PC-9 (cell line): ENCODE measurements at regions of chr13 and their contacts with region 1.

Region 1: DNA sequence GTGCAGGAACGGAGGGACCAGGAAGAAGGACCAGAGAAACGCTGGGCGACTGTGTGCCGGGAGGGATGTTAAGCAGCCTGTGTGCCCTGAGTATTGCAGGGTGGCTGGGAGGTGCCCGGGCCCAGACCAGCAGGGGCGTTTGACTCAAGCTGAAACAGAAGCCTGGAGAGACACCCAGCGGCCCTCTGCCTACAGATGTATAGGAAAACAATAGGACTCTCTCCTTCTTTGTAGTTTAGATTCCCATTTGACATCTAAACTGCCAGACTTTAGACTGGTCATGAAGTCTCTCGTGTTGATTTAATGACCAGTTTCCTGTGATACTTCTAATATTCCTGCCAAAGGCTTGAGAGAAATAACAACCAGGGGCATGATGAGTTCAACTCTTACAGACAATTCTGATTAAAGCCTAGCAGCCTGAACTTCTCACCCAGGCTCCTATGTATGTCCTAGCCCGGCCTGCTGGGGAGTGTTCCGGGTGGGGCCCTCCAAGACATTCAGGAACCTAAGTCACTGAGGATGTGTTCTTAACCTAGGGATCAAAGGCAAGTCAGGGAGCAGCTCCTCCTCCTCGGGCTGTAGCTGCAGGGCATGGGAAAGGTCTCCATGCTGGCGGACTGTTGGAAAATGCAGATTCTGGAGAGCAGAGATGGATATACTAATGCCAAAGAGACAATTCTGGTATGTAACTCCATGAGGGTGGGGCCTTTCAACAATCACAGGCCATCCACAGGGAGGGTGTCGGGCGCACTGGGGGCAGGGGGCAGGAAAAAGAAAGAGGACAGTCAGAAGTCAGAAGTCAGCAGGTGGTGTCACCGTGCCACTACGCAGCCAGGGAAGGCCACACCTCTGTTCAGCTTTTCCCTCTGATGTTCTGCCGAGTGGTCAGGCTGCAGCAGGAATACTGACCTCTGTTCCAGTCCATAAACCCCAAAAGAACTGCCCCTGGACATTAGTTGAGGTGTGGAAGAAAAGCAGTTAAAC is 131.8 kb downstream of the STARD13 start:
- DNase-seq: peak; percentile 35 to 48
- H3K4me3 ChIP-seq: no peak overlapping the region
- H3K27ac ChIP-seq: peak overlapping the region; percentile 83
- H3K4me1 ChIP-seq: peaks cover 41% of the 10 kb centered on the region
- H3K27me3 ChIP-seq: no peaks in the 10 kb centered on the region
- CTCF ChIP-seq: no peak

Region 2: GRCh38 chr13:33072283-33072682 is 81.4 kb before region 1 on chr13:
- CTCF ChIA-PET with region 1: no interaction called
- POLR2A ChIA-PET with region 1: no interaction called
- intact Hi-C with region 1: no loop called
- DNase-seq: no peak
- H3K4me3 ChIP-seq: no peak overlapping the region
- H3K27ac ChIP-seq: no peak overlapping the region
- H3K4me1 ChIP-seq: no peaks in the 10 kb centered on the region
- H3K27me3 ChIP-seq: no peaks in the 10 kb centered on the region
- CTCF ChIP-seq: no peak

Region 3: GRCh38 chr13:33125821-33126570 is 27.7 kb before region 1 on chr13:
- CTCF ChIA-PET with region 1: no interaction called
- POLR2A ChIA-PET with region 1: interaction called, 3 read pairs
- intact Hi-C with region 1: loop called (anchors 1 kb)
- DNase-seq: peak; percentile 73 to 98
- H3K4me3 ChIP-seq: peak overlapping the region; percentile 26; the same call in 1 of the 2 replicates
- H3K27ac ChIP-seq: peak overlapping the region; percentile 95
- H3K4me1 ChIP-seq: peaks cover 64% of the 10 kb centered on the region
- H3K27me3 ChIP-seq: no peaks in the 10 kb centered on the region
- CTCF ChIP-seq: no peak